K562 (cell line): ENCODE measurements at regions of chr7 and their contacts with region 1.

Region 1: GRCh38 chr7:107879400-107880035 is 11.5 kb upstream of the DLD start:
- DNase-seq: peak; percentile 57 to 78 (median 66)
- ATAC-seq: peak; percentile 88
- H3K4me3 ChIP-seq: no peak overlapping the region
- H3K27ac ChIP-seq: no peak overlapping the region
- H3K4me1 ChIP-seq: peaks cover 0 to 2% of the 10 kb centered on the region in 2 experiments; a peak in 1 of 5 replicates
- H3K27me3 ChIP-seq: peaks cover 2 to 13% of the 10 kb centered on the region in 2 experiments; a peak in 3 of 5 replicates
- CTCF ChIP-seq: peak; percentile 77 to 95 (median 89)
- EP300 ChIP-seq: peak; percentile 41; the same call in 1 of the 2 replicates
- POLR2A ChIP-seq: no peak
- RAD21 ChIP-seq: peak; percentile 94 to 95

Region 2: GRCh38 chr7:107186242-107186641 is 693.3 kb before region 1 on chr7:
- CTCF ChIA-PET with region 1: no interaction called
- POLR2A ChIA-PET with region 1: no interaction called
- in situ Hi-C with region 1: loop called (anchors 5 kb)
- intact Hi-C with region 1: no loop called
- DNase-seq: no peak
- ATAC-seq: no peak
- H3K4me3 ChIP-seq: no peak overlapping the region
- H3K27ac ChIP-seq: no peak overlapping the region
- H3K4me1 ChIP-seq: no peaks in the 10 kb centered on the region
- H3K27me3 ChIP-seq: no peaks in the 10 kb centered on the region
- CTCF ChIP-seq: no peak
- EP300 ChIP-seq: no peak
- POLR2A ChIP-seq: no peak
- RAD21 ChIP-seq: no peak

Region 3: DNA sequence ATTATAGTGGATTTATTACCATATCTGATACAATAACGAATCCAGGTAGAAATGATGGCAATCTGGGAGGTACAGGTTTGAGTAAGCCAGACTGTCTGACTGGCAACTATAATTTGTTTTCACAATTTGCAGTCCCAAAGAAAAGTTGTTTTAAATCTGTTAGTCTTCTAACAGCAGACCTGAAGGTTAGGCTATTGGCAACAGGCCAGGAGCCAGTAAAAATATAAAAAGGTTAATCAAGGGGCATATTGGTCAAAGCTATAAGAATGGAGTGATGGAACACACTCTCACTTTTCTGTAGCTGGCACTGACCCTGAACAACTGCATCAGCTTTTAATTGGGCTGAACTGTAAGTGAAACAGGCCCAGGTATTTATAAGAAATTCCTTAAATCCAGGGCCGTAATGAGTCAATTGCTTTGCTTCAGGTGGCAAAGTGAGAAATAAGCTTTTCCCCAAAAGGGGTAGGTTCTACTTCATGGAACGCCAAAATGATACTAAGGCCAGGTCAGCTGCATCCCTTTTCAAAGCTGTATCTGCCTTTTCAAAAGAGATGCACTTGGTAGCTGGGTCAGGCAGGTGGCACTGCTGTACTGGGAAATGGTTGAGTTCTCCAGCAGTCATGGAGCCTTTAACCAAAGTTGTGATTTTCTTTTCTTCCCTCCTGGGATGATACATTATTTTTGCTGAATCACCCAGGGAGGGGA is 416.6 kb before region 1 on chr7:
- CTCF ChIA-PET with region 1: interaction called, 17 read pairs
- POLR2A ChIA-PET with region 1: interaction called, 3 read pairs
- in situ Hi-C with region 1: loop called (anchors 10 kb)
- intact Hi-C with region 1: loop called (anchors 1 kb)
- DNase-seq: peak; percentile 20 to 77 (median 38)
- ATAC-seq: peak; percentile 92
- H3K4me3 ChIP-seq: no peak overlapping the region
- H3K27ac ChIP-seq: no peak overlapping the region
- H3K4me1 ChIP-seq: no peaks in the 10 kb centered on the region
- H3K27me3 ChIP-seq: no peaks in the 10 kb centered on the region
- CTCF ChIP-seq: peak; percentile 77 to 97 (median 82)
- EP300 ChIP-seq: 0 out of 2 replicates have a peak, but pooled peaks have one; percentile 24
- POLR2A ChIP-seq: no peak
- RAD21 ChIP-seq: peak; percentile 94 to 97

Region 4: GRCh38 chr7:107725151-107725740 is 154.3 kb before region 1 on chr7:
- CTCF ChIA-PET with region 1: interaction called, 3 read pairs
- POLR2A ChIA-PET with region 1: interaction called, 3 read pairs
- in situ Hi-C with region 1: no loop called
- intact Hi-C with region 1: loop called (anchors 1 kb)
- DNase-seq: peak; percentile 63 to 83 (median 70)
- ATAC-seq: peak; percentile 75
- H3K4me3 ChIP-seq: no peak overlapping the region
- H3K27ac ChIP-seq: no peak overlapping the region
- H3K4me1 ChIP-seq: peaks cover 0 to 6% of the 10 kb centered on the region in 2 experiments; a peak in 1 of 5 replicates
- H3K27me3 ChIP-seq: no peaks in the 10 kb centered on the region
- CTCF ChIP-seq: peak; percentile 56 to 91 (median 79); a peak in 5 of 6 replicates
- EP300 ChIP-seq: no peak
- POLR2A ChIP-seq: no peak
- RAD21 ChIP-seq: peak; percentile 94 to 95

Region 5: DNA sequence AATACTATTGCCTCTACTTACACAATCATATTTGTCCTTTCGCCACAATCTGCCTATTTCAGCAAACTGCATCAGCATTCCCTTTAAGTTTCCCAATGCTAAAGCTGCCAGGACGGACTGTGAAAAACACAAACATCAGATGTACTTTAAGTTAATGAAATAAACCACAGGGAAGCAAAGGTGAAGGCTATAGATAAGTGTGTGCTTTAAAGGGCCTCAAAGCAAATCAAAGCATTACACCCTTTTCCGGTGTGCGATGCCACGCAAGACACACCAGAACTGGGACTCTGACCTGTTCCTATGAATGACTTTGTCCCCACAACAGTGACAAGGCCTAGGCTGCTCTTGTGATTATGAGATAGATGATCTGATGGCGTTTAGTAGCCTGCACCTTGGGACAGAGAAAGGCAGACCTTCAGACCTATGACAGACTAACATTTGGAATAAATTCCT is 99.8 kb before region 1 on chr7:
- CTCF ChIA-PET with region 1: interaction called, 3 read pairs
- POLR2A ChIA-PET with region 1: no interaction called
- in situ Hi-C with region 1: no loop called
- intact Hi-C with region 1: loop called (anchors 5 kb)
- DNase-seq: peak in 1 of 4 experiments; percentile 21
- ATAC-seq: peak; percentile 64
- H3K4me3 ChIP-seq: no peak overlapping the region
- H3K27ac ChIP-seq: no peak overlapping the region
- H3K4me1 ChIP-seq: no peaks in the 10 kb centered on the region
- H3K27me3 ChIP-seq: peaks cover 23 to 27% of the 10 kb centered on the region in 2 experiments; a peak in 4 of 5 replicates
- CTCF ChIP-seq: no peak
- EP300 ChIP-seq: no peak
- POLR2A ChIP-seq: no peak
- RAD21 ChIP-seq: no peak